Mammary epithelial cell (primary cell): ENCODE measurements at regions of chr2 and their contacts with region 1.

Region 1: GRCh38 chr2:234500394-234501006 is 3.6 kb upstream of the ARL4C start:
- DNase-seq: peak; percentile 47
- H3K4me3 ChIP-seq: no peak overlapping the region
- H3K27ac ChIP-seq: no peak overlapping the region
- H3K4me1 ChIP-seq: peaks cover 31% of the 10 kb centered on the region
- H3K27me3 ChIP-seq: no peaks in the 10 kb centered on the region
- CTCF ChIP-seq: peak; percentile 54 to 73

Region 2: GRCh38 chr2:233854241-233854981 is 646.1 kb before region 1 on chr2 and contains the start of gene HJURP:
- CTCF ChIA-PET with region 1: no interaction called
- dilution Hi-C with region 1: no loop called
- in situ Hi-C with region 1: no loop called
- intact Hi-C with region 1: loop called (anchors 5 kb)
- DNase-seq: peak; percentile 93
- H3K4me3 ChIP-seq: peak within 1 kb of the TSS; percentile 94 to 95 (median 95)
- H3K27ac ChIP-seq: peak within 1 kb of the TSS; percentile 53
- H3K4me1 ChIP-seq: peaks cover 26% of the 10 kb centered on the region
- H3K27me3 ChIP-seq: no peaks in the 10 kb centered on the region
- CTCF ChIP-seq: no peak
- total RNA-seq, gene HJURP: 0.67 to 43.5 TPM

Region 3: DNA sequence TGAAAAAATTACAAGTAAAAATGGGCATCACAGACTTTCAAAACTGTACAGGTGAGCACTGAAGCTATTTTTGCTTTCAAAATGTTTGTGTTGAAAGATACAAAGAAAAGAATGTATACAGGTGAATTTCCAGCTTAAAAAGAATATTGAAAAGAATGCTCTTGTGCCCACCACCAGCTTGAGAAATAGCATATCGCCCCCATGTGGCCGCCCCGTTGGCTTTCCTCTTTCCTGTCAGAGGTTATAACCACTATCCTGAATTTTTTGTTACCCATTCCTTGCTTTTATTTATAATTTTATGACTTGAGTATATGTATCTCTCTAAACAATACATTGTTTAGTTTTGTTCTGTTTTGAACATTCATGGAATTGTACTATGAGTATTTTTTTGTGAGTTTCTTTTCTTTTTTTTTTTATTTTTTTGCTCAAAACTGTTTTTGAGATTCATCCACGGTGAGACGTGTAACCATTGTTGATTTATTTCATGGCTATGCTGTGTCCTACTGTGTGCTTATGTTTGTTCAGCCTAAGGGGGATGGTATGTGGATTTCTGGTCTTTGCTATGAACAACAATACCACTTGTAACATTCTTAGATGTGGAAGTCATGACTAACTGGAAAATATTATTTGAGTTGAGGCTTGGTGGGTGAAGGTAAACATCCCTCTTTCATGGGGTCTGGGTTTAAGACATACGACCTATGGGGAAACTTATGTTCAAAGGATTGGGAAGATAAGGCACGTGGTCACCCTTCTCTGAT is 571.7 kb before region 1 on chr2:
- CTCF ChIA-PET with region 1: no interaction called
- dilution Hi-C with region 1: no loop called
- in situ Hi-C with region 1: no loop called
- intact Hi-C with region 1: no loop called
- DNase-seq: no peak
- H3K4me3 ChIP-seq: no peak overlapping the region
- H3K27ac ChIP-seq: no peak overlapping the region
- H3K4me1 ChIP-seq: peaks cover 12% of the 10 kb centered on the region
- H3K27me3 ChIP-seq: no peaks in the 10 kb centered on the region
- CTCF ChIP-seq: peak; percentile 66 to 72

Region 4: GRCh38 chr2:233976690-233977294 is 523.7 kb before region 1 on chr2:
- CTCF ChIA-PET with region 1: no interaction called
- dilution Hi-C with region 1: no loop called
- in situ Hi-C with region 1: loop called in 1 of 2 experiments (anchors 10 kb)
- intact Hi-C with region 1: loop called (anchors 1 kb)
- DNase-seq: peak; percentile 70
- H3K4me3 ChIP-seq: no peak overlapping the region
- H3K27ac ChIP-seq: no peak overlapping the region
- H3K4me1 ChIP-seq: peaks cover 61% of the 10 kb centered on the region
- H3K27me3 ChIP-seq: no peaks in the 10 kb centered on the region
- CTCF ChIP-seq: peak; percentile 60 to 64

Region 5: GRCh38 chr2:234111523-234111922 is 389.0 kb before region 1 on chr2:
- CTCF ChIA-PET with region 1: no interaction called
- dilution Hi-C with region 1: loop called (anchors 5 kb)
- in situ Hi-C with region 1: no loop called
- intact Hi-C with region 1: no loop called
- DNase-seq: peak; percentile 96
- H3K4me3 ChIP-seq: no peak overlapping the region
- H3K27ac ChIP-seq: peak overlapping the region; percentile 30
- H3K4me1 ChIP-seq: peaks cover 32% of the 10 kb centered on the region
- H3K27me3 ChIP-seq: no peaks in the 10 kb centered on the region
- CTCF ChIP-seq: no peak

Region 6: DNA sequence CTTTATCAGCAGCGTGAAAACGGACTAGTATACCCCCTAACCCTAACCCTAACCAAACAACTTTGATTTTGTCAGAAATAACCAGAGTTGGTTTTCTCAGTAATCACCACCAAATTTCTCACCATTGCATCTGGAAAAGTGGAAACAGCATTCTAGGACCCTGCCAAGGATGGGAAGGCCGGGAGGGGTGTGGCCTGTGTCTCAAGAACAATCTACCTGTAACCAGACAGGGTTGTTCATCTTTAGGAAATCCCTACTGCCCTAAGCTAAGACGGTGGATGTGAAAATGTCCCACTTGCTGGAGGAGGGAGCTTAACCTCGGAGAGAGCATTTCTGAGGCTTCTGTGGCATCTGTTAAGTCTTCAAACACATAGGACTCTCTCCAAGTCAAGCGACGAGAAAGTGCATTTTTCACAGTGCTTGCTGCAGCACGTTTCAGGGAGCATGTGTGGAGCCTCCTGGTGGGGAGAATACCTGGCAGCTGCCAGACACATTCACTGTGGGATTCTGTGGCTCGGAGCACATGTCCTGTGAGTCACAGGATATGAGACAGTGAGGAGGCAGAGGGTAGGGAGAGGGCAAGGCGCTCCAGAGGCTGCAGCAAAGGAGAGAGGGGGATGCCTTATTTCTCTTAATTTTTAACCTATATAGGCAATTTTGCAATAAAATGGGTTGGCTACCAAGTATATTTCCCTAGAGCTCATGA is 242.5 kb before region 1 on chr2:
- CTCF ChIA-PET with region 1: no interaction called
- dilution Hi-C with region 1: no loop called
- in situ Hi-C with region 1: loop called (anchors 5 to 25 kb)
- intact Hi-C with region 1: loop called (anchors 1 kb)
- DNase-seq: peak; percentile 99
- H3K4me3 ChIP-seq: no peak overlapping the region
- H3K27ac ChIP-seq: peak overlapping the region; percentile 99
- H3K4me1 ChIP-seq: peaks cover 76% of the 10 kb centered on the region
- H3K27me3 ChIP-seq: no peaks in the 10 kb centered on the region
- CTCF ChIP-seq: peak; percentile 82 to 83

Region 7: DNA sequence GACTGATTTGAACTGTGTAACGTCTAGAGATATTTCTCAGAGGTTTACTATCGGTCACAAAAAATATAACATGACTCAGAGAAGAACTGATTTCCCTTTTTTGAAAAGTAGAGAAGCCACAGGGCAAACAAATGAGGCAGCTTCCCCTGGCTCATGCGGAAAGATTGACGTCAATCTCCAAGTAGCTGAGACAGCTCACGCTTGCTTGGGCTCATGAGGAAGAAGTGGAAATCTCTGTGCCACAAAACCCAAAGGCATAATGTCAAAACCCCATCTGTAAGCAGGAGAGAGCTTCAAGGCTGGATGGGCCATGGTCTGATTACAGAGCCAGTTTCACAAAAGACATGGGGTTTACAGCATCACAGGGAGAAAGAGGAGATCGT is 191.7 kb before region 1 on chr2:
- CTCF ChIA-PET with region 1: no interaction called
- dilution Hi-C with region 1: no loop called
- in situ Hi-C with region 1: loop called in 1 of 2 experiments (anchors 5 kb)
- intact Hi-C with region 1: no loop called
- DNase-seq: no peak
- H3K4me3 ChIP-seq: no peak overlapping the region
- H3K27ac ChIP-seq: no peak overlapping the region
- H3K4me1 ChIP-seq: peaks cover 26% of the 10 kb centered on the region
- H3K27me3 ChIP-seq: no peaks in the 10 kb centered on the region
- CTCF ChIP-seq: no peak

Region 8: DNA sequence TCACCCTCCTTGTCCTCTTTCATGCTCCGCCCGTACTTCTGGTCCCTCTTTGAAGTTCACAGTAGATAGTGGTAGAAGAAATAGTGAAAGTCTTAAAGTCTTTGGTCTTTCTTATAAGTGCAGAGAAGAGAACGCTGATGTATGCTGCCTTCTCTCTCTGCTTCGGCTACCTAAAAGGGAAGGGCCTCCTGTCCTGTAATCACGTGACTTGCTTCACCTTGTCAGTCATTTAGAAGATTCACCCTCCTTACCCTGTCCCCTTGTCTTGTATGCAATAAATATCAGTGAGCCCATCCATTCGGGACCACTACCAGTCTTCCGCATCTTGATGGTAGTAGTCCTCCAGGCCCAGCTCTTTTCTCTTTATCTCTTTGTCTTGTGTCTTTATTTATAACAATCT is 148.2 kb before region 1 on chr2:
- CTCF ChIA-PET with region 1: no interaction called
- dilution Hi-C with region 1: no loop called
- in situ Hi-C with region 1: no loop called
- intact Hi-C with region 1: no loop called
- DNase-seq: no peak
- H3K4me3 ChIP-seq: no peak overlapping the region
- H3K27ac ChIP-seq: no peak overlapping the region
- H3K4me1 ChIP-seq: no peaks in the 10 kb centered on the region
- H3K27me3 ChIP-seq: no peaks in the 10 kb centered on the region
- CTCF ChIP-seq: no peak

Region 9: GRCh38 chr2:234544659-234545611 is 44.4 kb after region 1 on chr2:
- CTCF ChIA-PET with region 1: no interaction called
- dilution Hi-C with region 1: no loop called
- in situ Hi-C with region 1: no loop called
- intact Hi-C with region 1: loop called (anchors 1 kb)
- DNase-seq: peak; percentile 47
- H3K4me3 ChIP-seq: no peak overlapping the region
- H3K27ac ChIP-seq: no peak overlapping the region
- H3K4me1 ChIP-seq: peaks cover 6% of the 10 kb centered on the region
- H3K27me3 ChIP-seq: no peaks in the 10 kb centered on the region
- CTCF ChIP-seq: peak; percentile 87 to 92

Region 10: GRCh38 chr2:234632527-234633391 is 132.3 kb after region 1 on chr2:
- CTCF ChIA-PET with region 1: no interaction called
- dilution Hi-C with region 1: no loop called
- in situ Hi-C with region 1: no loop called
- intact Hi-C with region 1: no loop called
- DNase-seq: peak; percentile 11
- H3K4me3 ChIP-seq: no peak overlapping the region
- H3K27ac ChIP-seq: no peak overlapping the region
- H3K4me1 ChIP-seq: peaks cover 6% of the 10 kb centered on the region
- H3K27me3 ChIP-seq: no peaks in the 10 kb centered on the region
- CTCF ChIP-seq: no peak